Motor neuron (in vitro differentiated cells): ENCODE measurements at regions of chr1 and their contacts with region 1.

Region 1: DNA sequence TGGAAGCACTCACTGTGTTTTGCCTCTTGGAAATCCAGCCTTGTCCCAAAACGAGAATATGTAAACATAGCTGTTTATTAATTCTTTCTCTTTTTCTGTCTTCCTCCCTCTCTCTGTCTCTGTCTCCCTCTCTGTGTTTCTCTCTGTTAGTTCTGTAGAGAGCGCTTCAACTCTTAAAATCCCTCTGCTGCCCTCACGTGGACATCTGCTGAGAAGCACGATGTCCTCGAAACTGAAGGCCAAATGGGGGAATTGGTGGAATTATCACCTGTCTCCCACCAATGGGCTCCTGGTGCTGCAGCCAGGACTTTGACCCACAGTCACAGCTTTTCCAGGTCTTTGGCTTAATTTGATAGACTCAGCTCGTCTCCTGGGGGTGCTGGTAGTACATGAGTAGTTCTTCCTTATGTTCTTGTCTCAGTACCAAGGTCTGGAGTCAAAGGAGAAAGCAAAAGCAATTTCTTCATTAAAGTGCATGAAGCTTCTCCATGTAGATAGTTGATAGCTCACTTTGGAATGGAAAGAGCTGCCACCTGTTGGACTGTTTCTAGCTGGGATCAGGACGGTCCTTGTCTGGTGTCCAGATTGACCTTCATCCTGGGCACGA is 5.5 kb upstream of the GBP6 start:
- ATAC-seq: peak; percentile 61 to 90 (median 74)
- H3K4me3 ChIP-seq: no peak overlapping the region
- H3K27ac ChIP-seq: no peak overlapping the region
- H3K4me1 ChIP-seq: no peaks in the 10 kb centered on the region

Region 2: DNA sequence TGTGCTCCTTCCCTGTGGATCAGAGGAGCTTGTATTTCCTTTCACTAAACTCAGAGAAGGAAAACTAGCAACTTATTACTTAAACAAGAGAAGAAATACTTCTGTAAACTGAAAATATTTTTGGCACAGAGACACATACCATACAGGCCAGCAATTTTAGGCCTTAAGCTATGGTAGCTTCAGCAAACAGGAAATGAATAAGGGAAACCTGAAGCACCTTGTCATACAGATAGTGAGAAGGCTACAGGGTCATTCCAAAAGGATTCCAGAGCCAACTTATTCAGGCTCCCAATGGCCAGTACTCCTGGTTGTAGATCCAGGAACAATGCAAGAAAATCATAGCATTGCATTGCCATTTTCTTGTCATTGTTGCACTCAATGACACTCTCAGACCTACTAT is 356.9 kb before region 1 on chr1:
- in situ Hi-C with region 1: loop called in 1 of 9 experiments (anchors 10 kb)
- ATAC-seq: no peak
- H3K4me3 ChIP-seq: no peak overlapping the region
- H3K27ac ChIP-seq: no peak overlapping the region
- H3K4me1 ChIP-seq: no peaks in the 10 kb centered on the region

Region 3: GRCh38 chr1:89085781-89086180 is 272.6 kb before region 1 on chr1:
- in situ Hi-C with region 1: loop called in 1 of 9 experiments (anchors 25 kb)
- ATAC-seq: peak in 2 of 8 experiments; percentile 72 to 76
- H3K4me3 ChIP-seq: no peak overlapping the region
- H3K27ac ChIP-seq: no peak overlapping the region
- H3K4me1 ChIP-seq: no peaks in the 10 kb centered on the region